Naive thymus-derived CD4-positive, alpha-beta T cell (primary cell): ENCODE measurements at regions of chr12 and their contacts with region 1.

Region 1: DNA sequence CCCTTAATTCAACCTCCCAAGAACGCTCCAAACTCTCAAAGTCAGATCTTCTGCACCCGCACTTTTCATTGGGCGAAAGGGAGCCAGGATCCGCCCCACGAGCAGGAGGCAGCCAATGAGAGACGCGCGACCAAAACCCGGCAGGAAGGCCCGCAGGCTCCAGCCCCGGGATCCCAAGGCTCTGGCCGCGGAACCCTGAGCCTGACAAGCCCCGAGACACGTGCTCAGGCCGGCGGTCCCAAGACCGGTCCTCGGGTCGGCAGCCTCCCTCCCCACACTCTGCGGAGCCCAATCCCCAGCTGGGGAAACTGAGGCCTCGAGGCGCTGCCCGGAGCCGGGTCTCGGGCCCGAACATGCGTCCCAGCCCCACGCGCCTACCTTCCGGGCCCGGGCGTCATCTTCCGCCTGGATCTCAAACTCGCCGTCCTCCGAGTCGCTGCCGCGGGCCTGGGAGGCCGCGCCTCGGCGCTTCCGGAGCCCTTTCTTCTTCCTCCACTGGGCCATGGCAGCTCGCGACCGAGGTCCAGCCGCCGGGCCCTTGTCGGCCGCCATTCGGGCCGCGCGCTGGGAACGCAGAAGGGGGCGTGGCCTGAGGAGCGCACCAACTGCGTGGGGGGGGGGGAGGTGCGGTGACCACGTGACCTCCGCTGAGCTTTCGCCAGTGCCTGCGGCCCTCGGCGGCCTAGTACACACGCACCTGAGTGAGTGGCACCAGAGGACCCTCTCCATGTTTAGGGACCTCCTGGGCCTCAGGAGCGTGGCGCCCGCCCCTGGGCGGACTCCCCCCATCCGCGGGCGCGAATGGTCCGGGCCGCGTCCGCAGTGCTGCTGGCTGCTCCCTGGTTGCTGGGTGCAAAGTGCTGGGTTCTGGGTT is at the starts of genes DDX54 and RITA1:
- DNase-seq: peak; percentile 85 to 95 (median 91)
- ATAC-seq: peak; percentile 88
- H3K4me3 ChIP-seq: peak within 1 kb of the TSS; percentile 77
- H3K4me3 Mint-ChIP-seq: peak within 1 kb of the TSS; percentile 92 to 99 (median 96)
- H3K27ac ChIP-seq: peak within 1 kb of the TSS; percentile 96
- H3K27ac Mint-ChIP-seq: peak within 1 kb of the TSS; percentile 91 to 98 (median 97)
- H3K4me1 ChIP-seq: peaks cover 20 to 32% of the 10 kb centered on the region in 2 donors
- H3K4me1 Mint-ChIP-seq: peaks cover 20 to 55% (median 33%) of the 10 kb centered on the region in 7 donors
- H3K27me3 ChIP-seq: no peaks in the 10 kb centered on the region
- H3K27me3 Mint-ChIP-seq: no peaks in the 10 kb centered on the region
- total RNA-seq, gene DDX54: 55.8 to 81.1 (median 76.7) TPM
- total RNA-seq, gene RITA1: 6.4 to 20.2 (median 14.1) TPM

Region 2: DNA sequence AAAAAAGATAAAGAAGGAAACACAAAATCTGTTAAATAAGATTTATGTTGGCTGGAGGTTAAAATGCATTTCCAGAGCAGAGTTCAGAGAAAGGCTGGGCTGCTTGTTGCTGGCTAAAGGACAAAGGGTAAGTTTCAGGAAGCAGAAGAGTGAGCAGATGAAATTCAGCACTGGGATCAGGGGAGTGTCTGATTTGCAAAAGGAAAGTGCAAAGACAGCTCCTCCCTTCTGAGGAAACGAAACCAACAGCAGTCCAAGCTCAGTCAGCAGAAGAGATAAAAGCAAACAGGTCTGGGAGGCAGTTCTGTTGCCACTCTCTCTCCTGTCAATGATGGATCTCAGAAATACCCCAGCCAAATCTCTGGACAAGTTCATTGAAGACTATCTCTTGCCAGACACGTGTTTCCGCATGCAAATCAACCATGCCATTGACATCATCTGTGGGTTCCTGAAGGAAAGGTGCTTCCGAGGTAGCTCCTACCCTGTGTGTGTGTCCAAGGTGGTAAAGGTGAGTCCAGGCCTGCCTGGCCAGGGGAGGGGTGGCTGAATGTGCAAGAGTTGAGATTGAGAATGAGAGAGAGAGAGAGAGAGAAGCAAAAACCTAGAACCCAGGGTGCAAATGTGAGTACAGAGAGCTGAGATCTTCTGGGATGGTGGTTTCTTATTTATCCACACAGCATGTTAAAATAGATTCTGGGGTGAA is 278.3 kb before region 1 on chr12 and contains the start of gene OAS1:
- CTCF ChIA-PET with region 1: no interaction called
- POLR2A ChIA-PET with region 1: no interaction called
- intact Hi-C with region 1: loop called in 1 of 2 experiments (anchors 10 kb)
- DNase-seq: peak in 8 of 9 donors; percentile 24 to 49 (median 40)
- ATAC-seq: peak; percentile 83
- H3K4me3 ChIP-seq: peak within 1 kb of the TSS; percentile 68
- H3K4me3 Mint-ChIP-seq: peak within 1 kb of the TSS; percentile 87 to 99 (median 92)
- H3K27ac ChIP-seq: peak within 1 kb of the TSS; percentile 71
- H3K27ac Mint-ChIP-seq: peak within 1 kb of the TSS; percentile 84 to 99 (median 92)
- H3K4me1 ChIP-seq: peaks cover 31 to 62% of the 10 kb centered on the region in 2 donors
- H3K4me1 Mint-ChIP-seq: peaks cover 61 to 92% (median 76%) of the 10 kb centered on the region in 7 donors
- H3K27me3 ChIP-seq: no peaks in the 10 kb centered on the region
- H3K27me3 Mint-ChIP-seq: no peaks in the 10 kb centered on the region
- total RNA-seq, gene OAS1: 5.1 to 169 (median 6.1) TPM

Region 3: GRCh38 chr12:113174461-113175384 is 10.4 kb before region 1 on chr12:
- CTCF ChIA-PET with region 1: interaction called, 8 read pairs
- POLR2A ChIA-PET with region 1: interaction called, 6 read pairs
- intact Hi-C with region 1: loop called in 1 of 2 experiments (anchors 1 kb)
- DNase-seq: peak; percentile 52 to 84 (median 66)
- ATAC-seq: peak; percentile 92
- H3K4me3 ChIP-seq: no peak overlapping the region
- H3K4me3 Mint-ChIP-seq: no peak overlapping the region
- H3K27ac ChIP-seq: no peak overlapping the region
- H3K27ac Mint-ChIP-seq: peak overlapping the region in 5 of 9 donors; percentile 2 to 77 (median 55)
- H3K4me1 ChIP-seq: no peaks in the 10 kb centered on the region
- H3K4me1 Mint-ChIP-seq: peaks cover 2 to 10% (median 6%) of the 10 kb centered on the region in 7 donors
- H3K27me3 ChIP-seq: no peaks in the 10 kb centered on the region
- H3K27me3 Mint-ChIP-seq: no peaks in the 10 kb centered on the region

Region 4: DNA sequence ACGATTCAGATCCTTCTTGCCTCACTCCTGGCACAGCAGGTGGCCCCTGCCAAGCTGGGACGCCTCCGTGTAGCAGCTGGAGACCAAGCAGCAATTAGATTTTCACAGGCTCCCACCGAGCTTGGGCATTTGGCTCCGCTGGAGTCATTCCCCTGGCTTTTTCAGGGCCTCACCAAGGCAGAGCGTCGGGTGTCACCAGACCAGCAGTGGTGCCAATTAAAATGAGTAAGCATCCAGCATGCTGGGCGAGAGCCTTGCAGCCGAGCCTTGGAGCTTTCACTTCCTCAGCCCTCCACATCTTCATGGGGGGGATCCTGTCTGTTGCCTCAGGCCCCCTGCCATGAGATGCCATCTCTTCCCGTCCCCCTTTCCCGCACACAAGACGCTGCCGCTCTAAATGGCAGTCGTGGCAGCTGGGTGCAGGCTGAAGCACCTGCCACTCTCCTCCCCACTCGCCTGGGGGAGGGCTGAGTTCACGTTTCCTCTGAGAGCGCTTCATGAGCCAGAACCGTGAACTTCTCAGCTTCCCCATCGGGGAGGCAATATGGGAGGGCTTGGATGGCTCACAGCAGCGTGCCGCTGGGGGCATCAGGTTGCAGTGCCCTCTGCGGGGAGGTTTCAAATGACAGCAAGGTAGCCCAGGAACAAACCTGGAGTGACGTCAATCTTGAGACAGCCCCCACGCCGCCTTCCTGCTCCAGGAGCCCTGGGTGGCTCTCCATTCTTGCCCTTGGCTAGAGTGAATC is 47.9 kb after region 1 on chr12:
- CTCF ChIA-PET with region 1: interaction called, 4 read pairs
- POLR2A ChIA-PET with region 1: interaction called, 5 read pairs
- intact Hi-C with region 1: loop called in 1 of 2 experiments (anchors 1 kb)
- DNase-seq: peak; percentile 46 to 91 (median 83)
- ATAC-seq: peak; percentile 95
- H3K4me3 ChIP-seq: peak overlapping the region; percentile 43
- H3K4me3 Mint-ChIP-seq: peak overlapping the region; percentile 81 to 94 (median 86)
- H3K27ac ChIP-seq: peak overlapping the region; percentile 68
- H3K27ac Mint-ChIP-seq: peak overlapping the region; percentile 86 to 96 (median 93)
- H3K4me1 ChIP-seq: peaks cover 7 to 60% of the 10 kb centered on the region in 2 donors
- H3K4me1 Mint-ChIP-seq: peaks cover 59 to 93% (median 75%) of the 10 kb centered on the region in 7 donors
- H3K27me3 ChIP-seq: no peaks in the 10 kb centered on the region
- H3K27me3 Mint-ChIP-seq: no peaks in the 10 kb centered on the region

Region 5: GRCh38 chr12:113965951-113966797 is 781.0 kb after region 1 on chr12 and contains the start of gene RBM19:
- CTCF ChIA-PET with region 1: no interaction called
- POLR2A ChIA-PET with region 1: no interaction called
- intact Hi-C with region 1: loop called in 1 of 2 experiments (anchors 10 kb)
- DNase-seq: peak; percentile 94 to 98 (median 96)
- ATAC-seq: peak; percentile 99
- H3K4me3 ChIP-seq: peak within 1 kb of the TSS; percentile 88
- H3K4me3 Mint-ChIP-seq: peak within 1 kb of the TSS; percentile 94 to 100 (median 98)
- H3K27ac ChIP-seq: peak within 1 kb of the TSS; percentile 54
- H3K27ac Mint-ChIP-seq: peak within 1 kb of the TSS; percentile 92 to 98 (median 95)
- H3K4me1 ChIP-seq: peaks cover 5% of the 10 kb centered on the region in 2 donors
- H3K4me1 Mint-ChIP-seq: peaks cover 38 to 72% (median 53%) of the 10 kb centered on the region in 7 donors
- H3K27me3 ChIP-seq: no peaks in the 10 kb centered on the region
- H3K27me3 Mint-ChIP-seq: peaks cover 0 to 9% (median 0%) of the 10 kb centered on the region in 5 donors
- total RNA-seq, gene RBM19: 45.8 to 108 (median 67.3) TPM